Activated T-helper 1 cell treated with anti-CD3 and anti-CD28 coated beads, Interleukin-12 subunit alpha, Interleukin-12 subunit beta, Interleukin-2, Interleukin-4 antibody, amounts not matched to agents 30 ng/mL and 10 ng/mL and 1 ng/mL, durations not matched to agents 14 hours and 24 hours and 36 hours (primary cell): ENCODE measurements at regions of chr18 and their contacts with region 1.

Region 1: GRCh38 chr18:36067055-36067957 is at the start of gene RPRD1A:
- DNase-seq: peak; percentile 94
- H3K4me3 Mint-ChIP-seq: peak within 1 kb of the TSS; percentile 90
- H3K27ac Mint-ChIP-seq: peak within 1 kb of the TSS; percentile 91
- H3K4me1 Mint-ChIP-seq: peaks cover 31% of the 10 kb centered on the region
- H3K27me3 Mint-ChIP-seq: peaks cover 3% of the 10 kb centered on the region
- total RNA-seq, gene RPRD1A: 20.5 and 24.8 TPM in 2 replicates

Region 2: DNA sequence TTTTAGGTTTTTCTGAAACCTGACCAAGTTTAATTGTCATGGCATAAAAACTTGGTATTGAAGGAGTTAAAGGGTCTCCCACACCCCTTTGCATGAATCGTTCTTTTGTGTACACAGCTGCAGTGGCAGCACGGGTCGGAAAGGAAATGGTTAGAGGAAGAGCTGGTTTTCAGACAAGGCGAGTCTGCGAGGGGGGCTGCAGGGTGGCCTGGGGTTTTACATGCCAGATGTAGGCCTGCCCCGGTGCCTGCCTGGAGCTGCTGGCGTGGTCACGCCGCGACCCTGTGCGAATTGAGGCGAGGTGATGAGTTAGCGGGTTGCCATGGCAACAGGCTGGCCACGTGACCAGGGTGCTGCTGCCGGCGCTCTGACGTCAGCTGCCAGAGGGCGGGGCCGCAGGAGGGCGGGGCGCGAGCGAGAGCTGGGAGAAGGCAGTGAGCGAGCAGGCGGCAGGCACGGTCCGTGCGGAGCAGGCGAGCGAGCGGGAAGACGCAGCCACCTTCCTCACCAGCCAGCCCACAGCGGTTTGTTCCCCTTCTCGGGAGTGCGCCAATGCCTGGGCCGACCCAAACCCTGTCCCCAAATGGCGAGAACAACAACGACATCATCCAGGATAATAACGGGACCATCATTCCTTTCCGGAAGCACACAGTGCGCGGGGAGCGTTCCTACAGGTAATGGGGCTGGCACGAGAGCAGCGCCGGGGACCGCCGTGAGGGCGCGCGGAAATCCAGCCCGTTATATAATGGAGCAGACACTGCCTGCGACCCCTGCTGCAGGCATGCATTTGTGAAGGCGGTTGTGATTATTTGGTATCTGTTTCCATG is 1026.1 kb before region 1 on chr18 and contains the start of gene MAPRE2:
- intact Hi-C with region 1: loop called (anchors 5 kb)
- DNase-seq: peak; percentile 98
- H3K4me3 Mint-ChIP-seq: peak within 1 kb of the TSS; percentile 96
- H3K27ac Mint-ChIP-seq: peak within 1 kb of the TSS; percentile 99
- H3K4me1 Mint-ChIP-seq: peaks cover 57% of the 10 kb centered on the region
- H3K27me3 Mint-ChIP-seq: no peaks in the 10 kb centered on the region
- total RNA-seq, gene MAPRE2: 50.7 TPM in 2 replicates

Region 3: DNA sequence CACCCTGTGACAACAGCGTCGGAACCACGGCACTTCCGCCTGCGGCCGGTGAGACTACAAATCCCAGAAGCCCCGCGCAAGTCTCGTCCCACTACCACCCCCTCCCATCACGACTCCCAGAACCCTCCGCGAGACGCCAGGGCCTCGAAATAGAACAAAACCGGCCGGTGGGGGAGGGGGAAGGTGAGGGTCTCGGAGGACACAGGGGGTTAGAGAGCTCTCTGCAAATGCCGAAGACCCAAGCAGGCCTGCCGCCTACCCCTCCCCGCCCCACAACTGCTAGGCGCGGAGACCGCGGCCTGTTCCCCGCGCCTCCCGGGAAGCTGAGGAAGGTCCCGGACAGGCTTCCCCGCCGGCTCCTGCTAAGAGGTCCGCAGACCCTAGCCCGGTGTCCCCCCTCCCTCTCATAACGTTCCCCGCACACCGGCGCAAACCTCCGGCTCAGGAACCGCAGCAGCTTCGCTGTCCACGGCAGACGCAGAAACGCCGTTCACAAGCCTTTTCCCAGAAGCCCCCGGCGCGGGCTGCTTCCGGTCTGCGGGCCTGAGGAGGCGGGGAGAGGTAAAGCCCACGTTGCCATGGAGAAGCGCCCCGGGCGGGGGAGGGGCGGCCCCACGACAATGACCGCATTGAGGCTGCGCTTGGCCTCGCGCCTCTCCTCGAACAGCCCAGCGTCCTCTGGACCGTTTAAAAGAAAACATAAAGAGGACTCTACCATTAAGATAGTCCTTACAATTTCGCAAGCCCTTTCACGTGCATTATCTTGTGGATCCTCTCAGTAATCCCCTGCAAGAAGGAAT is 723.2 kb before region 1 on chr18 and contains the start of gene ZNF24:
- intact Hi-C with region 1: loop called (anchors 1 kb)
- DNase-seq: peak; percentile 90
- H3K4me3 Mint-ChIP-seq: peak within 1 kb of the TSS; percentile 99
- H3K27ac Mint-ChIP-seq: peak within 1 kb of the TSS; percentile 98
- H3K4me1 Mint-ChIP-seq: peaks cover 38% of the 10 kb centered on the region
- H3K27me3 Mint-ChIP-seq: no peaks in the 10 kb centered on the region
- total RNA-seq, gene ZNF24: 56.4 and 56.6 TPM in 2 replicates

Region 4: DNA sequence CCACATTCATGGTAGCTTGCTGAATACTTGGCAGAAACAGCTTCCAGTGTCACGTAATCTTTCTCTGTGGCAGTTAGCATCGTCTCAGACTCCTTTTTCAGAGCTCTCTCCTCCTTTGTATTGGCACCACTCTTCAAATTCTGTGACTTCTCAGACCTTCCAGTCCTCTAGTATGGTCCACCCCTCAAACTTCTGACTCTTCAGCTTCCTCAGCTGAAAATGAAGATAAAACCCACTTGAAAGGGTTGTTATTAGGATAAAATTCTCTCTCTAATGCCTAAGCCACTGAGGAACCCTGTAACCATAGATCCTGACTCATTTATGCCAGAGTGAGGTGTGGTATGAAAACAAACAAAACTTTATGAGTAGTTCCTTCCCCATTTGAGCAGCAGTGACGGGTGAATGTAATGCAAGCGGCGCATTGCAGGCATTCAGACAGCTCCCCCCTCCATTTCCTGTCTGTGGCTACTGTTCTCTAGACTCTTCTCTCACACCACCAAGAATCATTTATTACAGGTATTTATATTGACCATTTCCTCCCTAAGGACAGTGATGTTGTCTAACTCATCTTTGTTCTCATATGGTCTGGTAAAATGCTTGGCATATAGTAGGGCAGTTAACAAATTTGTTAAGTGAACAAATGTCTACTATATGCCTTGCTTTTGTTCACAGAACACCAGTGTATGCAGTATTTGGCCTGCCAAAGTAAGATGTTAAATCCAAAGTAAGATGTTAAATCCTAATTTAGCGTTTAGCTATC is 450.5 kb before region 1 on chr18:
- intact Hi-C with region 1: loop called (anchors 10 kb)
- DNase-seq: peak; percentile 45
- H3K4me3 Mint-ChIP-seq: no peak overlapping the region
- H3K27ac Mint-ChIP-seq: no peak overlapping the region
- H3K4me1 Mint-ChIP-seq: peaks cover 19% of the 10 kb centered on the region
- H3K27me3 Mint-ChIP-seq: no peaks in the 10 kb centered on the region

Region 5: GRCh38 chr18:36034299-36034895 is 32.9 kb before region 1 on chr18:
- intact Hi-C with region 1: loop called (anchors 1 kb)
- DNase-seq: no peak
- H3K4me3 Mint-ChIP-seq: no peak overlapping the region
- H3K27ac Mint-ChIP-seq: no peak overlapping the region
- H3K4me1 Mint-ChIP-seq: peaks cover 18% of the 10 kb centered on the region
- H3K27me3 Mint-ChIP-seq: no peaks in the 10 kb centered on the region

Region 6: DNA sequence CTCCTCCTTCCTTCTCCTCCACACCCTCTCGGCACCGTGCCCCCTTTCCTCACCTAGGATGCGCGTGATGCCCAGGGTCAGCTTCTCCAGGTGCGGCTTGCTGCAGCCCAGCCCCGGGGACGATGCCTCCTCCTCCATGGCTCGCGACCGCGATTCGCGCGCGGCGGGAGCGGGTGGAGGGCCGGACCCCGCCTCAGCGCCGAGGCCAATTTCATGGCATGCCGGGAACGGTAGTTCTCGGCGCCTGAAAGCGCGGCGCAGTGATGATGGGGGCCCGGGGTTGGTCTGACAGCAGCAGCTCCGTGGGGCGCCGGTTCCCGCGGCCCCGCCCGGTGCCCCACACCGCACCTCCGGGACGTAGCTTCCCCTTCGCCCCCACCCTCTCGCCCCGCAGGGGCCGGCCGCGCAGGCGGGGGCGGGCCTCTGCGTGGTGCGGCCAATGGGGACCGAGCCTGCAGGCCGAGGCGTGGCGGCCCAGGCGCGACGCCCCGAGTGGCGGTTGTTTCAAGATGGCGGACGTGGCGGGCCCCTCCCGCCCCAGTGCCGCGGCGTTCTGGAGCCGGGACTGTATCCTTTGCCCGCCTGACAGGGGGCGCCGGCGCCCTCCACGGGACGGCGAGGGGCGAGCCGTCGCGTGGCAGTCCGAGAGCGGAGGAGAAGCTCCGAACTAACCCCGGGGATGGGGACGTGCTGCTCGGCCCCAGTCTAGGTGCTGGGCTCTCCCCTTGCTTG is 761.5 kb after region 1 on chr18 and contains the starts of genes KIAA1328 and TPGS2:
- intact Hi-C with region 1: loop called (anchors 2 kb)
- DNase-seq: peak; percentile 88
- H3K4me3 Mint-ChIP-seq: peak within 1 kb of the TSS; percentile 86
- H3K27ac Mint-ChIP-seq: peak within 1 kb of the TSS; percentile 94
- H3K4me1 Mint-ChIP-seq: peaks cover 51% of the 10 kb centered on the region
- H3K27me3 Mint-ChIP-seq: no peaks in the 10 kb centered on the region
- total RNA-seq, gene KIAA1328: 6.7 and 8.2 TPM in 2 replicates
- total RNA-seq, gene TPGS2: 68.5 and 72.6 TPM in 2 replicates